Keratinocyte (primary cell): ENCODE measurements at regions of chr12 and their contacts with region 1.

Region 1: GRCh38 chr12:122081697-122082221 is 3.2 kb downstream of the MLXIP start:
- DNase-seq: no peak
- H3K4me3 ChIP-seq: peak overlapping the region; percentile 62 to 99 (median 99)
- H3K27ac ChIP-seq: peak overlapping the region; percentile 79
- H3K4me1 ChIP-seq: peaks cover 26% of the 10 kb centered on the region
- H3K27me3 ChIP-seq: no peaks in the 10 kb centered on the region
- CTCF ChIP-seq: peak in 1 of 3 experiments; percentile 6

Region 2: DNA sequence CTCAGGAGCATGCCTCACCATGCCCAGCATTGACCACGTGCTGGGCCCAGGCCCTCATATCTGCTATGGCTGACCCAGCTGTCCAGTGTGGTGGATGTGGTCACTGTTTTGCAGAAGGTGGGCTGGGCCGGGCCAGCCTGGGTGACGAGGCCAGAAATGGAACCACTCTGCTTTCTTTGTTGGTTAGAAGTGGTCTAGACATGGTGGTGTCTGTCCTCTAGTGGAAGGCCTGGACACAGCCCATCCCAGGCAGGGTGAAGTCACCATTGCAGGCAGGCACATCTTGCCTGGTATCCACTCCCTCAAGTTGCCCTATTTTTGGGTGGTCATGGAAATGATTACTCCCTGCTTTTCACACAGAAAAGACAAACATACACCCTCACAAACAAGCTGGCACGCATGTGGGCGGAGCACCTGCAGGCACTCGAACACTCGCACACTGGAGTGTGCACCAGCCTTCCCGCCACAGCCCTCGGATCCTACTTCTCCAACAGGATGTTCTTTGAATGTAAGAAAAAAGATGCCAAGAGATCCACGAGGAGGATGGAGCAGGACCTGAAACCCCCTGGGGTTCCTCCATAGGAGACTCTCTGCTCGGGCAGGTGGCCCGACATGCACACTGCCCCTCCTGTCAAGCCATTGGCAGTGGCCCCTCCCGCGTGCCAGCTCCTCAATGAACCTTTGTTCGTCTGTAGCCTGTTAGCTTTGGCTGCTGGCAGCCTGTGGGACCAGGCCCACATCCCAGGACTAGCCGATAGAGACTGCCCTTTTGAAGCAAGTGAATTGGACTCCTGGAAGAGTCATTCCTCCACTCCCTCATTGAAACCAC is 35.2 kb after region 1 on chr12:
- dilution Hi-C with region 1: loop called (anchors 5 kb)
- DNase-seq: no peak
- H3K4me3 ChIP-seq: no peak overlapping the region
- H3K27ac ChIP-seq: no peak overlapping the region
- H3K4me1 ChIP-seq: peaks cover 7% of the 10 kb centered on the region
- H3K27me3 ChIP-seq: no peaks in the 10 kb centered on the region
- CTCF ChIP-seq: peak in 1 of 3 experiments; percentile 21

Region 3: DNA sequence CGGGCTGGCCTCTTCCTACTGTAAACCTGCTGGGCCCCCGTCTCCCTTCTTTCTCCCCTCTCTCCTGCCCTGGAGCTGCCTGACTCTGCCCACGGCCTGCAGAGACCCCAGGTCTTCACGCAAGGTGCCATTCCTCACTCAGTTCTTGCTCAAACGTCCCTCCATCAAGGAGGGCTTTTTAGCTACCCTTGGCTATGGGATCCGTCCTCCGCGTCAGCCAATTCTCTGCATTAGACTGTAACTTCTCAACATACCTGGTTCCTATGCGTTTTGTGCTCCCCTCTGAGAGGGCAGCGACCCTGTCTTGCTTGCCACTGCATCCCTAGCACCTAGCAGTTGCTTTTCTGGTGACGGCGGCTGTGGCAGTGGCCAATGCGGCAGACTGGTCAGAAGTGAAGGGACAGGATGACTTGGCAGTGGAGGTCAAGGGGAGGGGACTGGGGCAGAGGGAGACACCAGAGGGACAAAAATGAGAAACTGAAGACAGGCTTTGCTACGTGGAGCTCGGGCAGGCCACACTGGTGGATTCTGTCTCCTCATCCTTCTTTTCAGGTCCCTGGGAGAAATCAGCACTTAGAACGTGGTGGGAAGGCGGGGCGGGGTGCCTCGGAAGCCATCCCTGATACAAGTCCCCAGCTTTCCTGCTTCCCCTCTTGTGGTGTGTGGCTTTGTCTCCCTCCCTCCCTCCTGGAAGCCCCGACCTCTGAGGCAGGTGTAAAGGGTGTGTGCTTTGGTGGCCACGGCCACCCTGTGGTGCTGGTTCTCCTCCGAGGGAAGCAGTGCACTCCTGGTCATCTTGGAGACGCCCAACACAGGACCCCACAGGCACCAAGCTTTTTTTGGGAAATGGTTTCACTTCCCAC is 123.5 kb after region 1 on chr12:
- dilution Hi-C with region 1: no loop called
- DNase-seq: no peak
- H3K4me3 ChIP-seq: no peak overlapping the region
- H3K27ac ChIP-seq: no peak overlapping the region
- H3K4me1 ChIP-seq: peaks cover 3% of the 10 kb centered on the region
- H3K27me3 ChIP-seq: peaks cover 12% of the 10 kb centered on the region
- CTCF ChIP-seq: no peak